ENCODE measurements at regions of chrX and their contacts with region 1.

Region 1: DNA sequence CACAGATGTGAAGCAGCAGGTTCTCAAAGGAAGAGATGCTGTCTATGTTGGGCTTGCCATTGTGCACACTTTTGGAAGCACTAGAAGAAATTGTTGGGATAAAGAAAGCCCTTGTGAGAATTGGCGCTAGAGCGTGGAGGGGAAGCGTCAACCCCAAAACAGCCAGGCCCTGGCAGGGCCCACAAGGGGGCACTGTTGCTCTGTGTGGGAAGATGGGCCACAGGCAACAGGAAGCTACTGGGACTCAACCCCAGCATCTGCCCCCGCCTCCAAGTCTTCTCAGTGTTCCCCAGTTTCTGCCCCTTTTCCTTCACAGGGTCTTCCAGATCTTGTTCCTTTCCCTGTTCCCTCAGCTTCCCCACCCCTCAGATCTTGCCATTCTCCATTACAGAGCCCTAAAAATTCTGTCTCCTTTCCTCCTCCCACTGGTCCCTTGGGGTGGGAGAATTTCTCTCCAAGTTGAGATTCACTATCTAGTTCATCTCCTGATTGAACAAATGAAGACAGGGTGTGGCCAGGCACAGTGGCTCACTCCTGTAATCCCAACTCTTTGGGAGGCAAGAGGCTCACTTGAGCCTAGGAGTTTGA is 85.5 kb downstream of the STARD8 start:
- DNase-seq: peak; percentile 35
- ATAC-seq: peak; percentile 96
- H3K4me3 ChIP-seq: no peak overlapping the region
- H3K27ac ChIP-seq: no peak overlapping the region
- H3K4me1 ChIP-seq: no peaks in the 10 kb centered on the region
- H3K27me3 ChIP-seq: no peaks in the 10 kb centered on the region
- CTCF ChIP-seq: peak; percentile 64 to 80 (median 73)
- POLR2A ChIP-seq: no peak
- RAD21 ChIP-seq: peak; percentile 82

Region 2: DNA sequence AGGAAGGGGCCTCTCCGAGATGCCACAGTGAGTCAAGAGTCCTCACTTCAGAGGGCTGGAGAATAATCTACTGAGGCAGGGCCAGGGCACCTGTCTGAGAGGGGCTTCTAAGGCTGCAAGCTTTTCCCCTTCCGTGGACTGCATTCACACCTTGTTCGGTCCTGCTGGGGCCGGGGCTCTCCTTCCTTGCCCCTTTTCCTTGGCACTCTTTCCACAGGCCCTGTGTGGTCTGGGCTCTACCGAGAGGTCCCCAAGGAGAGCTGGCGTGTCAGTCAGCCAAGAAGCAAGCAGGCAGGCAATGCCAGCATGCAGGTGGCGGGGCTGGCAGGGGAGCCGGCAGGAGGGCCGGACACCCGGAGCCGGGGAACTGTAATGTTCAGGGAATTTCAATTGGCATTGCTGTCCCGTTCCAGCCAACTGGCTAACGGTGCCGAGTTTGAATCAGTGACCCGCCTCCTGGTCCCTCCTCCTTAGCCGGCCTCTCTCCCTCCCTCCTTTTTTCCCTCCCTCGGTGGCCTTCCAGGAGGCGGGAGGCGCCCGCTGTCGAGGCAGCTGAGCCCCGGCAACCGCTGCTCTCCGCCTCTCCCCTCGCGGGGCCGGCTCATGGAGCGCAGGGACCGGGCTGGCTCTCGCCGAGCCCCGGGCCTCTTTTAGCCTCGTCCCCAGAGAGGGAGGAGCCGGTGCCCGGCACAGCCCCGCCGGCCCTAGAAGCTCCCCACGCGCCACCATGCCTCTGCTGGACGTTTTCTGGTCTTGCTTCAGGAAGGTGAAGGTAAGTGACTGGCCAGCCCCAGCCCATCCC is 85.6 kb before region 1 on chrX and contains the start of gene STARD8:
- CTCF ChIA-PET with region 1: no interaction called
- POLR2A ChIA-PET with region 1: no interaction called
- RAD21 ChIA-PET with region 1: no interaction called
- intact Hi-C with region 1: no loop called
- DNase-seq: peak; percentile 32
- ATAC-seq: peak; percentile 93
- H3K4me3 ChIP-seq: peak within 1 kb of the TSS; percentile 48 to 59
- H3K27ac ChIP-seq: peak within 1 kb of the TSS; percentile 55; the same call in 1 of the 2 replicates
- H3K4me1 ChIP-seq: peaks cover 7 to 25% of the 10 kb centered on the region in 2 experiments
- H3K27me3 ChIP-seq: no peaks in the 10 kb centered on the region
- CTCF ChIP-seq: peak in 2 of 3 experiments; percentile 9 to 17; a peak in 2 of 6 replicates
- POLR2A ChIP-seq: no peak
- RAD21 ChIP-seq: no peak
- total RNA-seq, gene STARD8: 5.4 TPM

Region 3: GRCh38 chrX:68807818-68808217 is 74.8 kb after region 1 on chrX:
- CTCF ChIA-PET with region 1: interaction called, 43 read pairs
- POLR2A ChIA-PET with region 1: no interaction called
- RAD21 ChIA-PET with region 1: interaction called in 1 of 2 experiments, 11 read pairs
- intact Hi-C with region 1: loop called (anchors 1 kb)
- DNase-seq: peak; percentile 18
- ATAC-seq: peak; percentile 75
- H3K4me3 ChIP-seq: no peak overlapping the region
- H3K27ac ChIP-seq: no peak overlapping the region
- H3K4me1 ChIP-seq: no peaks in the 10 kb centered on the region
- H3K27me3 ChIP-seq: no peaks in the 10 kb centered on the region
- CTCF ChIP-seq: peak; percentile 34 to 47 (median 40); a peak in 4 of 6 replicates
- POLR2A ChIP-seq: no peak
- RAD21 ChIP-seq: peak; percentile 61

Region 4: DNA sequence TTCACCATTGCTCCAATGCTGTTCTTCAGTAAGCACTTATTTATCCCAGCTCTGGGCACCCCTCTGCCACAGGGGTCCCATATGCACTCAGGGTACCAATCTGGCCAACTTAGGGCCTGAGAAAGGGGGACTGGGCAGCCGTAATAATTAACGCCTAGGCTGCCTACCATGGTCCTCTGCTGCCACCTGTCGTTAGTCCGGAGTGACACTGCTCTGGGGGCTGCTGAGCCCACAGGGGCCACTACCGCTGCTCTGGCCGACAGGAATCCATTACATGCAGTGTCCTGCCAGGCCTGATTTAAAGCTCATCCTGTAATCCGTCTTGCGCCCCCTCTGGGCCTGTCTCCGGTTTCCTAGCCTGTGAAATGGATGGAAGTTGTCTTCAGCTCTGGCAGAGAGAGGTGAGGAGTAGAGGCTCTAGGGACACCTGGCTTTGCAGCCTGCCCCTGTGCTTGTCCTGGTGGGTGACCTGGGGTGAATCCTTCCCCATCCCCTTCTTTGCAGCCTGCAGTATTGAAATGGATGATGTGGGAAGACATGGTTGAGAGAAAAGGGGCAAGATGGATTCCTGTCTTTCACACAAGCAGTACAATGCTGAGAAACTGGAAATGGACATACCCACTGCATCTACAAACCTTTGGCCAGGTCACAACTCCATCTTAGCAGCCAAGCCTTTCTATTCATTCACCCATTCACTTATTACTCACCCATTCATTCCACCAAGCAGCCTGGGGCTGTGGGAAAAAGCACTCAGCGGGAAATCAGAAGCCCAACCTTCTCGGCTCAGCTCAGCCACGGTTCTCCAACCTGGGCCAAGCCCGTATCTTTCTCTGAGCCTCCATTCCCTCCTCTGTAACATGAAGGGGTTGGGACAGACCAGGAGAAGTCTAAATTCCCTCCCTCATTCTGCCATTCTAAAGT is 654.8 kb after region 1 on chrX:
- CTCF ChIA-PET with region 1: interaction called, 3 read pairs
- POLR2A ChIA-PET with region 1: no interaction called
- RAD21 ChIA-PET with region 1: no interaction called
- intact Hi-C with region 1: loop called (anchors 2 kb)
- DNase-seq: peak; percentile 31
- ATAC-seq: peak; percentile 98
- H3K4me3 ChIP-seq: no peak overlapping the region
- H3K27ac ChIP-seq: no peak overlapping the region
- H3K4me1 ChIP-seq: peaks cover 0 to 3% of the 10 kb centered on the region in 2 experiments; a peak in 1 of 4 replicates
- H3K27me3 ChIP-seq: 0 out of 2 replicates have a peak, but pooled peaks cover 4% of the 10 kb centered on the region
- CTCF ChIP-seq: peak; percentile 62 to 76 (median 71)
- POLR2A ChIP-seq: no peak
- RAD21 ChIP-seq: peak; percentile 85

Measured in HCT116 (cell line).